WTC11 (cell line): ENCODE measurements at regions of chr14 and their contacts with region 1.

Region 1: GRCh38 chr14:20970983-20971704 is 15.9 kb downstream of the RNASE2 start:
- DNase-seq: peak; percentile 91
- ATAC-seq: peak; percentile 93
- H3K4me3 Mint-ChIP-seq: peak overlapping the region; percentile 89
- H3K27ac Mint-ChIP-seq: peak overlapping the region; percentile 91
- H3K4me1 Mint-ChIP-seq: peaks cover 13% of the 10 kb centered on the region
- H3K27me3 Mint-ChIP-seq: peaks cover 24% of the 10 kb centered on the region
- CTCF ChIP-seq: peak; percentile 67

Region 2: GRCh38 chr14:20682435-20683124 is 288.6 kb before region 1 on chr14:
- CTCF ChIA-PET with region 1: interaction called, 21 read pairs
- POLR2A ChIA-PET with region 1: no interaction called
- DNase-seq: peak; percentile 73
- ATAC-seq: peak; percentile 38
- H3K4me3 Mint-ChIP-seq: no peak overlapping the region
- H3K27ac Mint-ChIP-seq: no peak overlapping the region
- H3K4me1 Mint-ChIP-seq: peaks cover 25% of the 10 kb centered on the region
- H3K27me3 Mint-ChIP-seq: peaks cover 10% of the 10 kb centered on the region
- CTCF ChIP-seq: no peak

Region 3: GRCh38 chr14:20855652-20856291 is 115.4 kb before region 1 on chr14:
- CTCF ChIA-PET with region 1: interaction called, 82 read pairs
- POLR2A ChIA-PET with region 1: no interaction called
- DNase-seq: peak; percentile 66
- ATAC-seq: peak; percentile 90
- H3K4me3 Mint-ChIP-seq: no peak overlapping the region
- H3K27ac Mint-ChIP-seq: no peak overlapping the region
- H3K4me1 Mint-ChIP-seq: peaks cover 12% of the 10 kb centered on the region
- H3K27me3 Mint-ChIP-seq: peaks cover 2% of the 10 kb centered on the region; the same call in 1 of the 2 replicates
- CTCF ChIP-seq: no peak

Region 4: GRCh38 chr14:20934148-20934762 is 36.9 kb before region 1 on chr14:
- CTCF ChIA-PET with region 1: interaction called, 16 read pairs
- POLR2A ChIA-PET with region 1: interaction called, 3 read pairs
- DNase-seq: peak; percentile 90
- ATAC-seq: peak; percentile 98
- H3K4me3 Mint-ChIP-seq: peak overlapping the region; percentile 54
- H3K27ac Mint-ChIP-seq: no peak overlapping the region
- H3K4me1 Mint-ChIP-seq: peaks cover 10% of the 10 kb centered on the region
- H3K27me3 Mint-ChIP-seq: peaks cover 16% of the 10 kb centered on the region
- CTCF ChIP-seq: peak; percentile 89

Region 5: DNA sequence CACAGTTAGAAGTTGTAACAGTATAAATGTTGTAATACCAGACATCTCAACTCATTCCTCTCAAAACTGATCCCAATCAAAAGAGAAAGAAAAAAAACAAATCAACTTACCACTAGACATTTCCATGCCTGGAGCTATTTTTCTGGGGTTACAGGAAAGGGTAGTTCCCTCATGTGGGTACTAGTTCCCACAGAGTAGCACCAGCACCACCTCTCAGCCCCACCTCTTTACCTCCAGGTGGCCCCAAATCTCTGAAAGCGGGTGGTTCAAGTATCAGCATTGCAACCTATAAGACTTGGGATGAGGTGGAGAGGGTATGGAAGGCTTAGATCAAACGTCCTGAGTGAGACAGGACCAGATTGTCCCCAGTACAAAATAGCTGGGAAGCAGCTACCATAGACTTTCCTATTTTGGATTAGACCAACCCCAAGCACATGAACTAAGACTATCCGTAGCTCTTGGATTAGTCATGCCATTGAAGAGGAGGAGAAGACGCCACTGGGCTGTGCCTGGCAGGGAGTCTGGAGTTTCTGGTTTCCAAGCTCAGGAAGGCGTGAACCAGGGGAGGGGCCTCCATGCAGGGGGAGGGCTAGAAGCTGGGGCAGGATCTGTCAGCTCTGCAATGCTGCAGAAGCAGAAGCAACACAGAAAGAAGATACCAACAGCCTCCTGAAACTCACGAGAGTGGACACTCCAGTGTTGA is 27.7 kb after region 1 on chr14 and contains the start of gene SLC39A2:
- CTCF ChIA-PET with region 1: interaction called, 65 read pairs
- POLR2A ChIA-PET with region 1: interaction called, 4 read pairs
- DNase-seq: peak; percentile 63
- ATAC-seq: peak; percentile 90
- H3K4me3 Mint-ChIP-seq: peak within 1 kb of the TSS; percentile 32
- H3K27ac Mint-ChIP-seq: peak within 1 kb of the TSS; percentile 55
- H3K4me1 Mint-ChIP-seq: peaks cover 18% of the 10 kb centered on the region
- H3K27me3 Mint-ChIP-seq: no peaks in the 10 kb centered on the region; the same call in 1 of the 2 replicates
- CTCF ChIP-seq: no peak
- total RNA-seq, gene SLC39A2: 0.14 TPM in 1 of 3 replicates, not detected in the others

Region 6: GRCh38 chr14:21039585-21040369 is 68.6 kb after region 1 on chr14:
- CTCF ChIA-PET with region 1: interaction called, 32 read pairs
- POLR2A ChIA-PET with region 1: no interaction called
- DNase-seq: peak; percentile 33
- ATAC-seq: peak; percentile 74
- H3K4me3 Mint-ChIP-seq: peak overlapping the region; percentile 25
- H3K27ac Mint-ChIP-seq: peak overlapping the region; percentile 72; the same call in 1 of the 2 replicates
- H3K4me1 Mint-ChIP-seq: peaks cover 26% of the 10 kb centered on the region
- H3K27me3 Mint-ChIP-seq: peaks cover 3% of the 10 kb centered on the region; the same call in 1 of the 2 replicates
- CTCF ChIP-seq: 0 out of 2 replicates have a peak, but pooled peaks have one; percentile 25

Region 7: GRCh38 chr14:21191809-21192446 is 220.8 kb after region 1 on chr14:
- CTCF ChIA-PET with region 1: interaction called, 10 read pairs
- POLR2A ChIA-PET with region 1: no interaction called
- DNase-seq: peak; percentile 91
- ATAC-seq: peak; percentile 98
- H3K4me3 Mint-ChIP-seq: peak overlapping the region; percentile 47
- H3K27ac Mint-ChIP-seq: peak overlapping the region; percentile 22; the same call in 1 of the 2 replicates
- H3K4me1 Mint-ChIP-seq: peaks cover 29% of the 10 kb centered on the region
- H3K27me3 Mint-ChIP-seq: peaks cover 5% of the 10 kb centered on the region
- CTCF ChIP-seq: no peak